ENCODE measurements at regions of chrX and their contacts with region 1.

Region 1: DNA sequence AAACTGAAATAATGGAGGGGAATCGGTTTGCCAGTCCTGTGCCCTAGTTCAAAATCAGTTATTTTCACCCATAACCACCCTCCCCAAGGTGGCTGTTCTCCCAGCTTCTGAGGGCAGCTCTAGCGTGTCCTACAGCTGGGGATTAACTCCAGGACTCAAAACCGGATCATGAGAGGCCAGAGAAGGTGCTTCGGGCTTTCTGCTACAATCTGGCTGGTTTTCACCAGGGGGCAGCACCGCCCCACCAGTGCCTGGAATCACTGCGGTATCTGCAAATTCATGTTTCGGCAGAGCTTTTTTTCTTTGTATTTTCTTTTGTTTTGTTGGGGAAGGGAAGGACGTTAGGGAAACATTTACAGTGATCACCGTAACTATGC is 28.4 kb downstream of the PDHA1 start:
- DNase-seq: peak; percentile 50 to 57 (median 55)
- H3K4me3 ChIP-seq: peak overlapping the region in 1 of 2 donors; percentile 47
- H3K4me3 Mint-ChIP-seq: peak overlapping the region; percentile 78 to 95 (median 86)
- H3K27ac ChIP-seq: no peak overlapping the region
- H3K27ac Mint-ChIP-seq: peak overlapping the region in 3 of 7 donors; percentile 13 to 85 (median 15)
- H3K4me1 ChIP-seq: no peaks in the 10 kb centered on the region
- H3K4me1 Mint-ChIP-seq: peaks cover 2 to 9% (median 5%) of the 10 kb centered on the region in 4 donors
- H3K27me3 ChIP-seq: no peaks in the 10 kb centered on the region
- H3K27me3 Mint-ChIP-seq: no peaks in the 10 kb centered on the region

Region 2: DNA sequence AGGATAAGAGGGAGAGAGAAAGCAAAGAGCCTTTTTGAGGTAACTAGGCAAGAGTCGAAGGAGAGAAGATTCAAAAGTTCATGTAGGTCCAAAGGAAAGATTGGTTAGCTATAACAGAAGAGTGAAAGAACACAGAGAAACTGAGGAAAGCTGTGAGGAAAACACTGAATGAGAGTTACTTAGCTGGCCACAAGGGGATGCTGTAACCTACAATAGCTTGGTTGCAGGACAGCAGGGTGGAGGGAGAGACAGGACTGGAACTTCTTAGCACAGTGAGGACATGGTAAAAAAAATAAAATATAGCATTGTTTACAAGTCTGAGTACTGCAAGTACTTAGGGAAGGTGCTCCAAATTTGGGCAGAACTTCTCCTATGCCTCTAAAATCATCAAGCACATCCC is 1559.4 kb before region 1 on chrX:
- CTCF ChIA-PET with region 1: no interaction called
- POLR2A ChIA-PET with region 1: no interaction called
- intact Hi-C with region 1: no loop called
- DNase-seq: no peak
- H3K4me3 ChIP-seq: no peak overlapping the region
- H3K4me3 Mint-ChIP-seq: no peak overlapping the region
- H3K27ac ChIP-seq: no peak overlapping the region
- H3K27ac Mint-ChIP-seq: no peak overlapping the region
- H3K4me1 ChIP-seq: no peaks in the 10 kb centered on the region
- H3K4me1 Mint-ChIP-seq: no peaks in the 10 kb centered on the region
- H3K27me3 ChIP-seq: no peaks in the 10 kb centered on the region
- H3K27me3 Mint-ChIP-seq: no peaks in the 10 kb centered on the region

Region 3: DNA sequence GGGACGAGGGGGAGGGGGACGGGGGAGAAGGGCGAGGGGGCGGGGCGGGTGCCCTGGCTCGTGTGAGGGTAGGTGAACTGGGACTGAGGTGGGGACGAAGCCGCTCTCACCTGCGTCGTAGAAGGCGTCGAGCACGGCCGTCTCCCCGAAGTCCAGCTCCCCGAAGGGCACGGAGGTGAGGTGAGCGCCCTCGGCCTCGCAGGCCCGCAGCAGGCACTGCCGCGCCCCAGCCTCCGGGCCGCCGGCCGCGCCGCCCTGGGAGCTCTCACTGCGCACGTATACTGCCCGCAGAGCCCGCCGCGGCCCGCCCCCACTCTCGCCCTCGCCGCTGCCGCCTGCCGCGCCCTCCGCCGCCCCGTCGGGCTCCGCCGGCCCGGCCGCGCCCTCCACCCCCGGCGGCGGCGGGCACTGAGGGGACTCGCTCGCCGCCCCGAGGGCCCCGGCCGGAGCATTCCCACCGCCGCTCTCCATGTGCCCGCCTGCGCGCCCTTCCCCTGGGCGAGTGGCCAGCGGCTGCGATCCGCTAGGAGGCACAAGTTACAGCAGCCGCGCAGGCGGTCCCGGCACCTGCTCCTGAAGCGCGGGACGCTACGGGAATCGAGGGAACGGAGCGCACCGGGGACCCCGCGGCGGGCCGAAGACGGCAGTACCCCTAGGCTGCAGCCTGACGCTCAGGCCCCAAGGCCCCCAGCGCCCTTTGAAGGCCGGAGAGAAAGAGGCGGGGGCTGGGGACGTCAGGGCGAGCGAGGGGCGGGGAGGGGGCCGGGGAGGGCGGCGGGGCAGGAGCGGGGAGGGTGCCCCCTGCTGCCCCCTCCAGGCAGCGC is 142.8 kb after region 1 on chrX and contains the start of gene MAP3K15:
- CTCF ChIA-PET with region 1: no interaction called
- POLR2A ChIA-PET with region 1: no interaction called
- intact Hi-C with region 1: loop called (anchors 5 kb)
- DNase-seq: peak in 2 of 5 donors; percentile 4 to 7
- H3K4me3 ChIP-seq: no peak within 1 kb of the TSS
- H3K4me3 Mint-ChIP-seq: peak within 1 kb of the TSS in 7 of 8 donors; percentile 21 to 74 (median 57)
- H3K27ac ChIP-seq: no peak within 1 kb of the TSS
- H3K27ac Mint-ChIP-seq: no peak within 1 kb of the TSS
- H3K4me1 ChIP-seq: no peaks in the 10 kb centered on the region
- H3K4me1 Mint-ChIP-seq: peaks cover 0 to 7% (median 4%) of the 10 kb centered on the region in 4 donors
- H3K27me3 ChIP-seq: no peaks in the 10 kb centered on the region
- H3K27me3 Mint-ChIP-seq: peaks cover 15 to 22% of the 10 kb centered on the region in 2 donors
- total RNA-seq, gene MAP3K15: not detected

Region 4: DNA sequence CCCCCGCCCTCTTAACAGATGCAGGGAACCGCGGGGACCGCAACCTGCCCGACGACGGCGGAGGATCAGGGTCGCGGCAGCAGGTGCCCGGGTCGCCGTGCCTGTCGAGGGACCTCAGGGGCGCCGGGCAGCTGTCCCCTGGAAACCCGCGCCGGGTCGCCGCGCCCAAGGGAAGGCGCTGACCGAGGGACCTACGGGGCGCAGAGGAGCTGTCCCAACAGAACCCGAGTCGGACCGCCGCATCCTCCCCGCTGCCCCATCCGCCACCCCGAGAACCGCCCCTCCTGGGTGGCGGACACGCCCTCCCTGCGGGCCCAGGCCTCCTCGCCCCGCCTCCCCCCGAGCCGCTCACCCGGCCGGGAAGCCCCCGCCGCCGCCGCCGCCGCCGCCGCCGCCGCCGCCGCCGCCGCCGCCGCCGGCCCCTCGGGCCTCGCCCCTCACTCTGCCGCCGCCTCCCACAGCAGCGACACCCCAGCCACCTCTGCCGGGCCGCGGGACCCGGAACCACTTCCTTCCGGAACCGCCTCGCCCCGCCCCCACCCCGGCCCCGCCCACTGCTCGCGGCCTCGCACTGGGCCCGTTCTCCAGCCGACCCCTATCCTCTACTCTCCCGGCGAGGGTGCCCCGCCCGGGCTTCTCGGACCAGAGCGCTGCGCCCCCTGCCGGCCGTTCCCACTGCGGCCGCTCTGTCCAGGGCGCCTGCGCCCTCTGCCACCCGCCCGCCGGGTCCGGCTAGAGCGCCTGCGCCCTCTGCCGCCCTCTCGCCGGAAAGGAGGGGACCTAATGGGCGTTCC is 618.6 kb after region 1 on chrX and contains the start of gene BCLAF3:
- CTCF ChIA-PET with region 1: interaction called, 4 read pairs
- POLR2A ChIA-PET with region 1: no interaction called
- intact Hi-C with region 1: loop called (anchors 1 kb)
- DNase-seq: peak; percentile 80 to 82 (median 81)
- H3K4me3 ChIP-seq: peak within 1 kb of the TSS in 1 of 2 donors; percentile 62
- H3K4me3 Mint-ChIP-seq: peak within 1 kb of the TSS; percentile 83 to 95 (median 90)
- H3K27ac ChIP-seq: peak within 1 kb of the TSS; percentile 70
- H3K27ac Mint-ChIP-seq: peak within 1 kb of the TSS; percentile 68 to 97 (median 94)
- H3K4me1 ChIP-seq: peaks cover 10% of the 10 kb centered on the region
- H3K4me1 Mint-ChIP-seq: peaks cover 10 to 31% (median 20%) of the 10 kb centered on the region in 4 donors
- H3K27me3 ChIP-seq: no peaks in the 10 kb centered on the region
- H3K27me3 Mint-ChIP-seq: no peaks in the 10 kb centered on the region
- total RNA-seq, gene BCLAF3: 12.6 to 15.0 TPM

Region 5: GRCh38 chrX:20066968-20067708 is 695.0 kb after region 1 on chrX:
- CTCF ChIA-PET with region 1: interaction called, 10 read pairs
- POLR2A ChIA-PET with region 1: no interaction called
- intact Hi-C with region 1: loop called (anchors 1 kb)
- DNase-seq: peak in 4 of 5 donors; percentile 24 to 31 (median 26)
- H3K4me3 ChIP-seq: no peak overlapping the region
- H3K4me3 Mint-ChIP-seq: no peak overlapping the region
- H3K27ac ChIP-seq: no peak overlapping the region
- H3K27ac Mint-ChIP-seq: peak overlapping the region in 1 of 7 donors; percentile 76
- H3K4me1 ChIP-seq: no peaks in the 10 kb centered on the region
- H3K4me1 Mint-ChIP-seq: no peaks in the 10 kb centered on the region
- H3K27me3 ChIP-seq: no peaks in the 10 kb centered on the region
- H3K27me3 Mint-ChIP-seq: no peaks in the 10 kb centered on the region

Region 6: GRCh38 chrX:20128670-20129069 is 756.5 kb after region 1 on chrX:
- CTCF ChIA-PET with region 1: no interaction called
- POLR2A ChIA-PET with region 1: no interaction called
- intact Hi-C with region 1: loop called (anchors 10 kb)
- DNase-seq: no peak
- H3K4me3 ChIP-seq: no peak overlapping the region
- H3K4me3 Mint-ChIP-seq: no peak overlapping the region
- H3K27ac ChIP-seq: no peak overlapping the region
- H3K27ac Mint-ChIP-seq: peak overlapping the region in 2 of 7 donors; percentile 68 to 88
- H3K4me1 ChIP-seq: no peaks in the 10 kb centered on the region
- H3K4me1 Mint-ChIP-seq: peaks cover 0 to 10% (median 3%) of the 10 kb centered on the region in 4 donors
- H3K27me3 ChIP-seq: no peaks in the 10 kb centered on the region
- H3K27me3 Mint-ChIP-seq: no peaks in the 10 kb centered on the region